ENCODE measurements at regions of chr17 and their contacts with region 1.

Region 1: DNA sequence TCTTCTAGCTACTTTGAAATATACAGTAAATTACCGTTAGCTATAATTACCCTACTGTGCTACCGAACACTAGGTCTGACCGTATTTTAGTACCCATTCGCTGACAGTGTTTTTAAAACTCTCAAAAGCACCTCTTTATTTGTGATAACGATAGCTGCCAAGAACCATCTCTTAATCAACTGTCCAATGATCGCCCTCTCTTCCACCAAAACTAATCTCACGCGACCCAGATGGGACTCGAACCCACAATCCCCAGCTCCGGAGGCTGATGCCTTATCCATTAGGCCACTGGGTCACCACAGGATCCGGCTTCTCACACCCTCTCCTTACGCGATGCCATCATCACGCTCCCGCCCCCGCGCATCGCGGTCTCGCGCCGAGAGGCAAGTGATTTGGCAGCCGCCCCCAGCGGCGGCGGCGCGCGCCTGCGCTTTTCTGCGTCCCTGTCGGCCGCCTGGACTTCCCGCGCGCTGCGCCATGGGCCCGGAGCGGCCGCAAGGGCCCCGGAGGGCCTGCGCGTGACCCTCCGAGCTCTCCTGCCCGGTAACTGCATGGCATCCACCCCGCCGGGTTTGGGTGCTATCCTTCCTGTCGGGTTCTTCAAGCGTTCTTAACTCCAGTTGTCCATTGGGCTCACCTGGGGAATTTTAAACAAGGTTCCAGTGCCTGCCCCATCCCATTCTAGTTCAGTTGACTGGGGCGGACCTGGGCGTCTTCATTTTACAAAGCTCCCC is 15.7 kb upstream of the KPNA2 start:
- DNase-seq: peak; percentile 96
- H3K4me3 ChIP-seq: peak overlapping the region; percentile 41 to 45 (median 43)
- H3K27ac ChIP-seq: peak overlapping the region; percentile 40
- H3K4me1 ChIP-seq: peaks cover 7% of the 10 kb centered on the region
- H3K27me3 ChIP-seq: no peaks in the 10 kb centered on the region
- CTCF ChIP-seq: peak; percentile 16 to 43

Region 2: GRCh38 chr17:67959288-67959900 is 60.4 kb before region 1 on chr17:
- CTCF ChIA-PET with region 1: no interaction called
- dilution Hi-C with region 1: no loop called
- in situ Hi-C with region 1: loop called in 1 of 2 experiments (anchors 10 kb)
- intact Hi-C with region 1: no loop called
- DNase-seq: no peak
- H3K4me3 ChIP-seq: no peak overlapping the region
- H3K27ac ChIP-seq: no peak overlapping the region
- H3K4me1 ChIP-seq: no peaks in the 10 kb centered on the region
- H3K27me3 ChIP-seq: no peaks in the 10 kb centered on the region
- CTCF ChIP-seq: no peak

Region 3: GRCh38 chr17:67993596-67994361 is 26.1 kb before region 1 on chr17:
- CTCF ChIA-PET with region 1: no interaction called
- dilution Hi-C with region 1: no loop called
- in situ Hi-C with region 1: no loop called
- intact Hi-C with region 1: loop called (anchors 1 kb)
- DNase-seq: peak; percentile 68
- H3K4me3 ChIP-seq: peak overlapping the region; percentile 72 to 87 (median 73)
- H3K27ac ChIP-seq: peak overlapping the region; percentile 2
- H3K4me1 ChIP-seq: peaks cover 24% of the 10 kb centered on the region
- H3K27me3 ChIP-seq: no peaks in the 10 kb centered on the region
- CTCF ChIP-seq: no peak

Region 4: DNA sequence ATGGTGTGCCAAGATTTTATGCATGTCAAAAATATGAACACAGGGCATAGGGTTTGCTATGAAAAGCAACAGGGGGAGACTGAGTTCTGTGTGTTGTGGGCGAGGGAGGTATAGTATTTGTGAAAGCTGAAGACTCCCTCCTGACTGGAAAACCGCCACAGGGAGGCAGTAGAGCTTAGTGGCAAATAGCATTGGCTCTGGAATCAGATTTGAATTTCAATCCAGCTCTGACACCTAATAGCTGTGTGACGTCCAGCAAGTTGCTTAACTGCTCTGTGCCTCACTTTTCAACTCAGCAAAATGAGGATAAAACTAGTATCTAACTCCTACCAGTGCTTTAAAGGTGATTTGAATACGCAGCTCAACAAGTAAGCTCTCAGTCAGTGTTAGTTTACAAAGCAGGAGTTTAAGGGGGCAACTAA is 37.7 kb after region 1 on chr17:
- CTCF ChIA-PET with region 1: interaction called, 20 read pairs
- dilution Hi-C with region 1: no loop called
- in situ Hi-C with region 1: no loop called
- intact Hi-C with region 1: no loop called
- DNase-seq: no peak
- H3K4me3 ChIP-seq: no peak overlapping the region
- H3K27ac ChIP-seq: no peak overlapping the region
- H3K4me1 ChIP-seq: no peaks in the 10 kb centered on the region
- H3K27me3 ChIP-seq: peaks cover 3% of the 10 kb centered on the region
- CTCF ChIP-seq: peak; percentile 29 to 47

Measured in mammary epithelial cell (primary cell).